OCI-LY7 (cell line): ENCODE measurements at regions of chr7 and their contacts with region 1.

Region 1: GRCh38 chr7:22103255-22103969 is 157.7 kb upstream of the CDCA7L start:
- DNase-seq: peak; percentile 86
- H3K4me3 ChIP-seq: no peak overlapping the region
- H3K27ac ChIP-seq: no peak overlapping the region
- H3K4me1 ChIP-seq: no peaks in the 10 kb centered on the region
- CTCF ChIP-seq: peak; percentile 96

Region 2: DNA sequence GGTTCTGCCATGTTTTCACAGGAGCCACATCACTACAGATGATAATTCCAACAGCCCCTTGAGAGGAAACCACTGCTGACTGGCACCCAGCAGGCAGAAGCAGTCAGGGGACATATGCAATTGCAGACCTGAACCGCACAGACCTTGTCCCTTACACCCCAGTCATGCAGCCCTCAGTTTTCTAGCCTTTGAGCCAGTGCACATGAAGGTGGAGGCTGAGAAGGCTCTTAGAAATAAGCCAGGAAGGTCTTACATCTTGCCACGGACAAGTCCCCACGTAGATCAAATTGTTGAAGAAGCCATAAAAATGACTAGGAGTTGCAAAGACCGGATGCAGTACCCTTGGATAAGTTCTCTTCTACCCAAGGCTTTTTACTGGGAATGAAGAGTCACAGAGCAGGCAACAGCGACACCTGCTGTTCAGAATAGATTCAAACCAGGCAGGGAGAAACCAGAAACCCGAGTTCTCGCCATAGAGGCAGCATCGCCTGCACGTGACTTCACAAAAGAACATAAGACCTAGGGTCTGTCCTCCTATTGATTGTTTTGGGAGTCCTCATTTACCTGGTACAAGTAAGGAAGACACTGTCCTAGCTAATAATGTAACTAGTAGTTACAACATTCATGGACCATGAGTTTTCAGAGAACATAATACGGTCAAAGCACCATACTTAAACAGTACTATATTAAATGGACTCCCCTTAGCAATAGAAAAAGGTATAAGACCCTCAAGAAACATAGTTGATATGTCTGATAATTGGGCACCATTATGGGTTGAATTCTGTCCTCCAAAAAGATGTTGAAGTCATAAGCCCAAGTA is 385.4 kb after region 1 on chr7:
- CTCF ChIA-PET with region 1: no interaction called
- POLR2A ChIA-PET with region 1: interaction called, 3 read pairs
- intact Hi-C with region 1: loop called (anchors 1 kb)
- DNase-seq: peak; percentile 82
- H3K4me3 ChIP-seq: no peak overlapping the region
- H3K27ac ChIP-seq: no peak overlapping the region
- H3K4me1 ChIP-seq: peaks cover 37% of the 10 kb centered on the region
- CTCF ChIP-seq: peak; percentile 99

Region 3: DNA sequence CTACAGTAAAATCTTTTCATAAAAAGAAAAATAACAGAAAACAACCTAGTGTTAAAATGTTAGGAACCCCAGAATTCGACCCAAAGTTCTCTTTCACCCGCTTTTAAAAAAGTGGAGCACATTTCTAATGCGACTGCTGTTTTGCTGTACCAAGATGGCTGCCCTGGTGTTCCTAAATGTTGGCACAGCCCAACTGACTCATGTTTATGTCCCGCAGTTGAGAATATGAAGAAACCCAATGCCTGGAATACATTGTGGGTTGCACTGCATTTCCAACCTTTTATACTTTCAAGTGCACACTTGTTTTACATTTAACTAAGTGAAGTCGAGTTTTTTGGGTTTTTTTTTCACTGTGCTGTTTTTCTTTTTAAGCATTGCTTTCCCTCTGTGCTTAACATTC is 395.6 kb after region 1 on chr7:
- CTCF ChIA-PET with region 1: interaction called, 3 read pairs
- POLR2A ChIA-PET with region 1: no interaction called
- intact Hi-C with region 1: loop called (anchors 1 kb)
- DNase-seq: no peak
- H3K4me3 ChIP-seq: no peak overlapping the region
- H3K27ac ChIP-seq: no peak overlapping the region
- H3K4me1 ChIP-seq: peaks cover 3% of the 10 kb centered on the region
- CTCF ChIP-seq: no peak

Region 4: DNA sequence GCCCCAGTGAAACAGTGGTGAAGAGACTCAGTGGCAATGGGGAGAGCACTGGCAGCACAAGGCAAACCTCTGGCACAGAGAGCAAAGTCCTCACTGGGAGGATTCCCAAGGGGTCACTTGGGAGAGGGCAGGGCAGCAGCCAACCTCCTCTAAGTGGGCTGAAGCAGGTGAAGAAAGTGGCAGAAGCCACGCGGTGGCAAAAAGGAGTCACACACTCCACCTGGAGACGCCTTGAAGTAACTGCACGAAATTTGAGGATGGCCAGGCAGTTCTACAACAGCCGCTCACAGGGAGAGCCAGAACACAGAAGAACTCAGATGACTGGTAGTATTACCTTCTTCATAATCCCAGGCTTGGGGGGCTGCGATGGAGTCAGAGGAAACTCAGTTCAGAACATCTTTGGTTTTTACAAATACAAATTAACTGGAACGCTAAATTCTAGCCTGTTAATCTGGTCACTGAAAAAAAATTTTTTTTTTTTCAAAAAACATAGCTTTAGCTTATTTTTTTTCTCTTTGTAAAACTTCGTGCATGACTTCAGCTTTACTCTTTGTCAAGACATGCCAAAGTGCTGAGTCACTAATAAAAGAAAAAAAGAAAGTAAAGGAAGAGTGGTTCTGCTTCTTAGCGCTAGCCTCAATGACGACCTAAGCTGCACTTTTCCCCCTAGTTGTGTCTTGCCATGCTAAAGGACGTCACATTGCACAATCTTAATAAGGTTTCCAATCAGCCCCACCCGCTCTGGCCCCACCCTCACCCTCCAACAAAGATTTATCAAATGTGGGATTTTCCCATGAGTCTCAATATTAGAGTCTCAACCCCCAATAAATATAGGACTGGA is 623.2 kb after region 1 on chr7:
- CTCF ChIA-PET with region 1: no interaction called
- POLR2A ChIA-PET with region 1: no interaction called
- intact Hi-C with region 1: loop called (anchors 10 kb)
- DNase-seq: peak; percentile 70
- H3K4me3 ChIP-seq: no peak overlapping the region
- H3K27ac ChIP-seq: no peak overlapping the region
- H3K4me1 ChIP-seq: peaks cover 3% of the 10 kb centered on the region
- CTCF ChIP-seq: peak; percentile 82